Calu3 (cell line): ENCODE measurements at regions of chr2 and their contacts with region 1.

Region 1: DNA sequence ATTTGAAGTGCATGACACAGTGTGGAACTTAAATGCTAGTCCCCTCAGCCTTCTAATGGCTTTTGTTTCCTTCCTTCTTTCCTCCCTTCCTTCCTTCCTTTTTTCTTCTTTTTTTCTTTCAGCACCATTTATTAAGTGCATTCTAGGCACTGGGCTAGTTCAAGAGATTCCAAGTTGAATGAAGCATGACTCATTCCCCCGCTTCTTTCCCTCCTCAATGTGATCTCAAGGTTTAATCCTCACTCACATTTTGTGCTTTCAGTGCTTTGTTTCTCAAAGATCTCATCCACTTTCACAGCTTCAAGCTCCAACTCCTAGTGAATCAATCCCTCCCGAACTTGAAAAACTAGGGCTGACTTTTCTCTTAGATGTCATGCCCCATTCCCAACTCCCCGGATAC is 90.1 kb downstream of the LBH start:
- DNase-seq: no peak
- H3K4me3 Mint-ChIP-seq: no peak overlapping the region
- H3K27ac Mint-ChIP-seq: no peak overlapping the region
- H3K4me1 Mint-ChIP-seq: no peaks in the 10 kb centered on the region
- H3K27me3 Mint-ChIP-seq: peaks cover 9% of the 10 kb centered on the region
- CTCF ChIP-seq: no peak

Region 2: GRCh38 chr2:30231212-30231995 is 90.1 kb before region 1 on chr2 and contains the start of gene LBH:
- CTCF ChIA-PET with region 1: no interaction called
- intact Hi-C with region 1: loop called (anchors 10 kb)
- DNase-seq: peak; percentile 23
- H3K4me3 Mint-ChIP-seq: peak within 1 kb of the TSS; percentile 73
- H3K27ac Mint-ChIP-seq: no peak within 1 kb of the TSS
- H3K4me1 Mint-ChIP-seq: peaks cover 14% of the 10 kb centered on the region
- H3K27me3 Mint-ChIP-seq: peaks cover 73% of the 10 kb centered on the region
- CTCF ChIP-seq: no peak
- total RNA-seq, gene LBH: 2.4 and 3.3 TPM in 2 replicates

Region 3: GRCh38 chr2:30351116-30351515 is 29.6 kb after region 1 on chr2:
- CTCF ChIA-PET with region 1: no interaction called
- intact Hi-C with region 1: no loop called
- DNase-seq: no peak
- H3K4me3 Mint-ChIP-seq: no peak overlapping the region
- H3K27ac Mint-ChIP-seq: no peak overlapping the region
- H3K4me1 Mint-ChIP-seq: no peaks in the 10 kb centered on the region
- H3K27me3 Mint-ChIP-seq: peaks cover 30% of the 10 kb centered on the region
- CTCF ChIP-seq: no peak